OCI-LY7 (cell line): ENCODE measurements at regions of chr1 and their contacts with region 1.

Region 1: GRCh38 chr1:84077476-84078107 is 66.5 kb upstream of the PRKACB start:
- DNase-seq: peak; percentile 89
- H3K4me3 ChIP-seq: peak overlapping the region; percentile 80
- H3K27ac ChIP-seq: peak overlapping the region; percentile 32
- H3K4me1 ChIP-seq: peaks cover 15% of the 10 kb centered on the region
- CTCF ChIP-seq: no peak

Region 2: DNA sequence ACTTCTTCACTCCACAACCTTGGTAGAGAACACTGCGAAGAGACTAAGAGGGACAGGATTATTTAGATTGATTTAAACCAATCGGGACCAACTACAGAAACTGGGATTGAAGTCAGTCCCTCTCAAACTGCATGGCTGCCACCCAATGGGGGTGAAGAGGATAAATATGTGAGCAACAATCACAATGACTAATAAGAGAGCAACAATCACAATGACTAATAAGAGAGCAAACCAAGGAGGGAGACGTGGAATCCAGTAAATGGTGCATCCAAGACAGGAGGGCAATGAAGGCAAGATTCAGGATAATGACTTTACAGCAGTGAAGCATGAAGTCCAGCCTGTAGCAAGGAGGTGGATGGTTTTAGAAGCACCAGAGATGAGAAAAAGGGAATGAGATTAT is 401.5 kb before region 1 on chr1:
- CTCF ChIA-PET with region 1: no interaction called
- POLR2A ChIA-PET with region 1: no interaction called
- intact Hi-C with region 1: no loop called
- DNase-seq: no peak
- H3K4me3 ChIP-seq: no peak overlapping the region
- H3K27ac ChIP-seq: no peak overlapping the region
- H3K4me1 ChIP-seq: no peaks in the 10 kb centered on the region
- CTCF ChIP-seq: no peak

Region 3: DNA sequence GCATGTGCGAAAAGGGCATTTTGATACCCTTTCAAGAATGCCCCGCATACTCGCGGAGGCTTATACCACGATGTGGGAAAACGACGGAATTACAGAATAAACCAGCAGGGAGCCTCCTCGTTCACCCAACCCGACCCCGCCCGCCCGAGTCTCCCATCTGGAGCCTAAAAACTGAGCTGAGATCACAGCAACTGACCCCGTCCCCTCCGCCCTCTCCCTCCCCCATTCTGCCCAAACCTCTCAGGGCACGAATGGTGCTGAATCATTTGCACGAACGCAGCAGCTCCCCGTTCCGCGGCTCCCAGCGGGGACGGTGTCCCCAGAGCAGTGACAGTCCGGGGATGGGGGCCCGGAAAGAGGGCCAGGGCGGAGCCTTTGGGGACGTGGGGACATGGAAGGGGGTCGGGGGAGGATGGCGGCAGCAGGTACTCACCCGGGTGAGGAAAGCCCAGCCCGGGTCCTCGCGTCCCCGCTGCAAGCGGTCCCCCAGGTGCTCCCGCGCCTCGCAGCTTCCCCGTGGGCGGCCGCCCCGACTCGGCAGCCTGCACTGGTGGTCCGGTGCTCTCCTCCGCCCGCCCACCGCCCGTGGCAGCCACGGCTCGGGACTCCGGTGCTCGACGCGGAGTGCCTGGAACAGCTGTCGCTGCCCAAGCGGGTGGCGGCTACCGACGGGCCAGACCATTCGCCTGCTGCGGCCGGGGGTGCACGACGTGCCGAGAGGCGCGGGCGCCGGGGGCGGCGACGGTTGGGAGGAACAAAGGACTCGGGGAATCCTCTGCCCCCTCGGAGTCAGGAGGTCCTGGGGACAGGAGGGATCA is 78.9 kb before region 1 on chr1 and contains the start of gene TTLL7:
- CTCF ChIA-PET with region 1: no interaction called
- POLR2A ChIA-PET with region 1: no interaction called
- intact Hi-C with region 1: loop called (anchors 1 kb)
- DNase-seq: peak; percentile 77
- H3K4me3 ChIP-seq: peak within 1 kb of the TSS; percentile 74
- H3K27ac ChIP-seq: no peak within 1 kb of the TSS
- H3K4me1 ChIP-seq: peaks cover 5% of the 10 kb centered on the region
- CTCF ChIP-seq: no peak
- total RNA-seq, gene TTLL7: 0.49 and 0.76 TPM in 2 replicates

Region 4: DNA sequence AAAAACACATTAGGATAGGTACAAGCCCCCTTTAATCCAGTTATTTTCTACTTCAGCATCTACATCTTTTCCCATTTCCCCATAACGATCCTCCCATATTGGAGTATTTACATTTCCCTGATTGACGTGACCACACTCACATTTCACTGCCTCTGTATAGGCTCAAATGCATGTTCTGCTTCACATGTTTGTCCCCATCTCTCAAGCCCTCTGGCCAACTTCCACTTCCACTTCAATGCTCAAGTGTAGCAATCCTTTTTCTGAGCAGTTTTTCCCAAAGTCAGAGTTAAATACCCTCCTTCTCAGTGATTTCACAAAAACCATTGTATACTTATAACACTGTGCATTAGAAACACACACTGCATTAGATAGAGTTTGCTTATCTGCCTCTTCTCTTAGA is 16.8 kb before region 1 on chr1:
- CTCF ChIA-PET with region 1: no interaction called
- POLR2A ChIA-PET with region 1: interaction called, 12 read pairs
- intact Hi-C with region 1: no loop called
- DNase-seq: no peak
- H3K4me3 ChIP-seq: no peak overlapping the region
- H3K27ac ChIP-seq: no peak overlapping the region
- H3K4me1 ChIP-seq: no peaks in the 10 kb centered on the region
- CTCF ChIP-seq: no peak

Region 5: DNA sequence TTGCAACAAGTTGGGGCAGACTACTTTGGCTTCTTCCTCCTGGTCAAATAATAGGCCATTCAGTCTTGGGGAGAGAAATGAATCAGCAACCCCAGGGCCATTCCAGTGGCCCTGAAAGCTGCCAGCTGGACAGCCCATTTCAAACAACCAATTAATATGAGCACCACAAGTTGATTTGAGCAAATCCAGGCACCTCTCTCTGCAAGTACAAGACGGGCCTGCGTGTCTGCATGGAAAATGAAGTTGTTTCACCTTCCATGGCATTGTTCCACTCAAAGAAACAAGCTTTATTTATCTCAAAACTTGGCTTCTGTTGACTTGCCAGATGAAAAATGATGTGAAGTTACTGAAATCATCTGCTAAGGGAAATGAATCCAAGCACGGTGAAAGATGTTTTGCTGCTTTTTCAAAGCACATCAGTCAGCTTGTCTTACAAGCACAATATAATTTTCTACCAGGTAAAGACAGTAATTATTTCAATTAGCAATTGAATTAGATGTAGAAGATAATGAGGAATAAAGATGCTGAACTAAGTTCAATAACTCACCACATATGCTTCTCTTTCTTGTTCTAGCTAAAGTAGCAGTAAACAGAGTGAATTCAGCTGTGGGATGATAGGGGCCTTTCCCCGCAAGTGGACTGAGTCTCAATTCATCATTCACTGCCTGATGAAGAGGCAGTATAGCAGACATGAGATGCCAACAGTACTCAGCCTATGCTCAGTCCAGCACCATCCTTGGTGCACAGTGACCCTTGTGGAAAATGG is 707.9 kb after region 1 on chr1:
- CTCF ChIA-PET with region 1: no interaction called
- POLR2A ChIA-PET with region 1: no interaction called
- intact Hi-C with region 1: no loop called
- DNase-seq: no peak
- H3K4me3 ChIP-seq: no peak overlapping the region
- H3K27ac ChIP-seq: no peak overlapping the region
- H3K4me1 ChIP-seq: no peaks in the 10 kb centered on the region
- CTCF ChIP-seq: no peak